Activated naive CD4-positive, alpha-beta T cell treated with anti-CD3 and anti-CD28 coated beads for 36 hours (primary cell): ENCODE measurements at regions of chr5 and their contacts with region 1.

Region 1: DNA sequence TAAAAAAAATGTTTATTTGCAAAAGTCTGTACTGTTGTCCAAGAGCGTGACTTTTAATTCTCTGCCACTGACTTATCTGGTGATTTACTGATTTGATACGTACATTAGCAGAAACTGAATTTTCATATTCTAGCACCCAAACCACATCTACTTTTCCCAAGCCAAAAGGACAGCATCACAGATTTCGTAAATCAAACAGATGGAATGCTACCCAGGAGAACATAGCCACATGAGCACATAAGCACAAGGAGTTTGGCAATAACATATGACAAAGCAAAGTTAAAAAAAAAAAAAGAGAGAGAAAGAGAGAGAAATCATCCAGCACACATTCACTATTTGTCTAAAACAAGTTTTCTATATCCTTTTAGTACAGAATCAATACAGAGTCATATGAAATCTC is 83.7 kb downstream of the HINT1 start:
- DNase-seq: no peak
- H3K4me3 Mint-ChIP-seq: no peak overlapping the region
- H3K27ac Mint-ChIP-seq: no peak overlapping the region
- H3K4me1 Mint-ChIP-seq: peaks cover 18% of the 10 kb centered on the region
- H3K27me3 Mint-ChIP-seq: no peaks in the 10 kb centered on the region

Region 2: DNA sequence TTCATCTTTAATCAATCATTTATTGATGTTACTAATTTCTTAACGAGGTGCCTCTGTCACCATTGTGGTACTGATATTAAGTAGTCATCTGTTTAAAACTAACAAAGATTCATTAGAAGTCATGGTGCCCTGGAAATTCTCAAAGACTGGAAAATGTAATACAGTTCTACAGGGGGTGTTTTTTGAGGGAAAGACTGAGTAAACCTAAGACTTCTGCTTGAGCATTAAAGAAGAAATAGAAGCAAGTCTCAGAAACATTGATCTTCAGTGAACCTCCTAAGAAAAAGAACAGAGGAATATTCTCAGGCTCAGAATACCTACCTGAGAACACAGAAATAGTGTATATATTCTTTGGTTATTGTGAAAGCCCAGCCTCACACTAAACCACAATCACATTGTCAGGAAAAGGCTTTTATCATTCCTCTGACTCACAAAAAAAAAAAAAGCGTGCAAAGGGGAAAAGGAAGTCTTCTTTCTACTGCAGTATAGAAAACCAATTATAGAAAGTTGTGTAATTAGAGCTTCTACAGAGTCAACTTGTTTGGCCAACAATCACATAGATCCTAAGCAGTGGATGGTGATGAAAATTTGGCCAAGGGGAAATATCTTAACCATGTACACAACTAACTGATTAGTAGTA is 22.9 kb after region 1 on chr5:
- CTCF ChIA-PET with region 1: no interaction called
- intact Hi-C with region 1: loop called (anchors 1 kb)
- DNase-seq: no peak
- H3K4me3 Mint-ChIP-seq: no peak overlapping the region
- H3K27ac Mint-ChIP-seq: no peak overlapping the region
- H3K4me1 Mint-ChIP-seq: peaks cover 12% of the 10 kb centered on the region
- H3K27me3 Mint-ChIP-seq: no peaks in the 10 kb centered on the region

Region 3: DNA sequence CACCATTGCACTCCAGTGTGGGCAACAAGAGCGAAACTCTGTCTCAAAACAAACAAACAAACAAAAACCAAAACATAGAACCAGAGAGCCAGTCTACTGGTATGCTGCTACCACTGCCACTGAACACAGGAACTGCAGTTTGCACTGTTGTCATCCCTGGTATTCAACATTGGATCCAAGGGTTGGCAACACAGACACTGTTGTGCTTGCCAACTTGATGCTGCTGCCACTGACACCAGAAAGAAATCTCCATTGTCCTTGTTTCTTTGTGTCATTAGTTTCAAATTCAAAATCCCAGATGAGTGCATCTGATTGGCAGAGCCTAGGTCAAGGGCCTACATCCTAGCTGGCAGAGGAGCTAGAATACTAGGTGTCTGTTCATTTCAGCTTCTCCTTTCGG is 67.5 kb after region 1 on chr5:
- CTCF ChIA-PET with region 1: no interaction called
- intact Hi-C with region 1: no loop called
- DNase-seq: no peak
- H3K4me3 Mint-ChIP-seq: no peak overlapping the region
- H3K27ac Mint-ChIP-seq: no peak overlapping the region
- H3K4me1 Mint-ChIP-seq: no peaks in the 10 kb centered on the region
- H3K27me3 Mint-ChIP-seq: no peaks in the 10 kb centered on the region